ENCODE measurements at regions of chr22 and their contacts with region 1.

Region 1: GRCh38 chr22:28600546-28601143 is 79.0 kb downstream of the TTC28 start:
- DNase-seq: peak in 1 of 7 donors; percentile 11
- H3K4me3 ChIP-seq: no peak overlapping the region
- H3K27ac ChIP-seq: no peak overlapping the region
- H3K4me1 ChIP-seq: peaks cover 0 to 3% of the 10 kb centered on the region in 2 donors
- H3K27me3 ChIP-seq: no peaks in the 10 kb centered on the region
- CTCF ChIP-seq: peak; percentile 26 to 74 (median 58)
- POLR2A ChIP-seq: no peak

Region 2: DNA sequence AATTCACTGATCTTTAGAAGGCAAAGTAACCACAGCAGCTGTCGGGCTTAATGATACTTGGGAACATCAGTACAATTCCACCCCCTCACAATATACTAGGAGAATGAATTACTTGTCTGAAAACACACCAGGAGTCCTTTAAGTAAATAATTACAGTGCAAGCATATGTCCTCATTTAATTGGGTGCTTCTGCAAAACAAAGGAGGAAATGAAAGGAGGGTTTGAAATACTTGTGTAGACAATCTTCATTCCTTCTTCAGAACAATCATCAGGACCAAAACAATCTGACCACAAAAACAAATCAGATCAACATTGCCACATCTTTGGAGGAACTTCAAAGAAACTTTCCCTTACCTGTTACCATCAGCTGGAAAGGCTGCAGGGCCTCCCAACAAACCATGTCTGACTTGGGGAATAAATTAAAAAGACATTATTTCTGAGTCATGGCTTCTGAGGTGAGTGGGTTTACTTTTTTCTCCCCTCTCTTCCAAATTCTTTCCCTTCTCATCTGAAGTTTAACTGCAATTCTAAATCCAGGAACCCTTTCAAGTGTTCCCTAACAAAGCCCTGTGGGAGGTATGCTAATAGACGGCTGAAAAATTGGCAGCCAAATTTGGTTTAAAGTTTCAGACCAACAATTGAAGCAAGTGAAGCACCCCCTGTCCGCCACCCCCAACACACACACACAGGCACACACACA is 159.4 kb after region 1 on chr22:
- intact Hi-C with region 1: loop called in 1 of 2 experiments (anchors 10 kb)
- DNase-seq: no peak
- H3K4me3 ChIP-seq: no peak overlapping the region
- H3K27ac ChIP-seq: no peak overlapping the region
- H3K4me1 ChIP-seq: no peaks in the 10 kb centered on the region
- H3K27me3 ChIP-seq: no peaks in the 10 kb centered on the region
- CTCF ChIP-seq: no peak
- POLR2A ChIP-seq: no peak

Region 3: DNA sequence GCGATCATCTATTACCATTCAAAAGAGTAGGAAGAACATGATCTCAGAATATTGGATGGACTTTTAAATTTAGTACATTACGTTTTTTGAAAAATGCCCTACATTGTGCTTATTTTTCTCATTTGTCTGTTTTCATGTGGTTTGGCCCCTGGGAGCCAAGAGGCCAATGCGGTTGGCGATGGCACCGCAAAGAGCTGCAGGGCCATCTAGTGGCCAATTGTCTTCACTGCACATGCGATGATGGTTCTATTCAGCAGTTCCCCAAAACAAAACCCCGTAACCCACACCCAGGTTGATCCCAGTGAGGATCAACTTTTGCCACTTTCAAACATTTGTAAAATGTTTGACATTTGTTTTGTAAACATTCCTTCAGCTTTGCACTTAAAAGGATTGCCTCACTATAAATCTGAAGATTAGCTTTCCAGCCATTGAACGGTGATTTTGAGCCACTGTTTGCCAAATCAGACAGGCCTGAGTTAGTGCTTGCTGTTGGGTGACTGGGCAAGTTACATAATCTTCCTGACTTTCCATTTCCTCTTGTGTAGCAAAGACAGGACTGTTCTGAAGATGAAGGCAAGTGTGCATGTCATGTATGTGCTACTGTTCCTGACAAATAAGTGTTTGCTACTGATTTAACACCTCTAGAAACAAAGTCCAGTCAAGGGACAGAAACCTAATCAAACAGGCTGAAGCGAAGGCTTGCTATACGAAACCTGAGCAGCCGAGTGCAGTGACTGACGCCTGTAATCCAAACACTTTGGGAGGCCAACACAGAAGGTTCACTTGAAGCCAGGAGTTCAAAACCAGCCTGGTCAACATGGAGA is 228.9 kb after region 1 on chr22:
- intact Hi-C with region 1: loop called (anchors 5 kb)
- DNase-seq: peak; percentile 78 to 94 (median 85)
- H3K4me3 ChIP-seq: no peak overlapping the region
- H3K27ac ChIP-seq: peak overlapping the region in 3 of 5 donors; percentile 27 to 67 (median 45)
- H3K4me1 ChIP-seq: peaks cover 0 to 21% of the 10 kb centered on the region in 2 donors
- H3K27me3 ChIP-seq: no peaks in the 10 kb centered on the region
- CTCF ChIP-seq: peak; percentile 96 to 99 (median 98)
- POLR2A ChIP-seq: no peak

Measured in adrenal gland (tissue), 19 donors.